ENCODE measurements at regions of chr6 and their contacts with region 1.

Region 1: DNA sequence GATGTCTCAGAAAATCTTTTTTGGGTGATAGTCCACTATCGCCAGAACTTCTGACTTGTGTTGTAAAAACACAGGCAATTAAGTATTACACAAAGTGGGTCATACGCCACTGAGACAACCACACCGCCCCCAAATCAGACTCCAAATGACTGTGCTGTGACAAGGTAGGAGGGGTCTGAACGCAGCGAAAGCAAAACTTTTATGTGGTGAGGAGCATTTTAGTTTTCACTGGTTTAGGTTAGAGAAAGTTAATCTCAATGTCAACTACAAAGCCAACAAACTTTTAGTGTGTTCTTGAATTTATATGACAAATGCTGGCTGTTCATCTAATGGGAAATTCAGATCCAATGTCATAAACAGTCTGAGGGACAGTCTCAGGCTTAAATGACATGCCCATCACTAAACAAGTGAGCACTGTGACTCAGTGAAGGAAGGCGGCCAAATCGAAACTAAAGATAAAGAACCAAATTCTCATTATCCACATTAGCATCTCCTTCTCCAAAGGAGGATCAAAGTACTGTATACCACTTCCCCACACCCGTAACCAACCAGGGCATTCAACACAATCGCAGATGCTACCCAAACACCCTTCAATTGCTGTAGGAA is 186.7 kb downstream of the GJA10 start:
- DNase-seq: peak; percentile 76 to 90 (median 84)
- H3K4me3 ChIP-seq: peak overlapping the region; percentile 24 to 54
- H3K4me3 Mint-ChIP-seq: peak overlapping the region; percentile 80 to 98 (median 96)
- H3K27ac ChIP-seq: peak overlapping the region; percentile 64
- H3K27ac Mint-ChIP-seq: peak overlapping the region; percentile 91 to 99 (median 98)
- H3K4me1 ChIP-seq: peaks cover 75% of the 10 kb centered on the region
- H3K4me1 Mint-ChIP-seq: peaks cover 64 to 94% (median 79%) of the 10 kb centered on the region in 4 donors
- H3K27me3 ChIP-seq: no peaks in the 10 kb centered on the region
- H3K27me3 Mint-ChIP-seq: no peaks in the 10 kb centered on the region

Region 2: GRCh38 chr6:90068264-90068663 is 12.7 kb before region 1 on chr6:
- CTCF ChIA-PET with region 1: no interaction called
- POLR2A ChIA-PET with region 1: interaction called, 6 read pairs
- intact Hi-C with region 1: loop called (anchors 1 kb)
- DNase-seq: no peak
- H3K4me3 ChIP-seq: no peak overlapping the region
- H3K4me3 Mint-ChIP-seq: peak overlapping the region in 2 of 8 donors; percentile 11 to 35
- H3K27ac ChIP-seq: no peak overlapping the region
- H3K27ac Mint-ChIP-seq: peak overlapping the region in 1 of 7 donors; percentile 32
- H3K4me1 ChIP-seq: peaks cover 32% of the 10 kb centered on the region
- H3K4me1 Mint-ChIP-seq: peaks cover 52 to 88% (median 67%) of the 10 kb centered on the region in 4 donors
- H3K27me3 ChIP-seq: no peaks in the 10 kb centered on the region
- H3K27me3 Mint-ChIP-seq: no peaks in the 10 kb centered on the region

Region 3: GRCh38 chr6:90131614-90132423 is 50.8 kb after region 1 on chr6:
- CTCF ChIA-PET with region 1: no interaction called
- POLR2A ChIA-PET with region 1: no interaction called
- intact Hi-C with region 1: no loop called
- DNase-seq: no peak
- H3K4me3 ChIP-seq: no peak overlapping the region
- H3K4me3 Mint-ChIP-seq: no peak overlapping the region
- H3K27ac ChIP-seq: no peak overlapping the region
- H3K27ac Mint-ChIP-seq: peak overlapping the region in 1 of 7 donors; percentile 10
- H3K4me1 ChIP-seq: no peaks in the 10 kb centered on the region
- H3K4me1 Mint-ChIP-seq: peaks cover 7 to 24% (median 16%) of the 10 kb centered on the region in 4 donors
- H3K27me3 ChIP-seq: no peaks in the 10 kb centered on the region
- H3K27me3 Mint-ChIP-seq: no peaks in the 10 kb centered on the region

Region 4: DNA sequence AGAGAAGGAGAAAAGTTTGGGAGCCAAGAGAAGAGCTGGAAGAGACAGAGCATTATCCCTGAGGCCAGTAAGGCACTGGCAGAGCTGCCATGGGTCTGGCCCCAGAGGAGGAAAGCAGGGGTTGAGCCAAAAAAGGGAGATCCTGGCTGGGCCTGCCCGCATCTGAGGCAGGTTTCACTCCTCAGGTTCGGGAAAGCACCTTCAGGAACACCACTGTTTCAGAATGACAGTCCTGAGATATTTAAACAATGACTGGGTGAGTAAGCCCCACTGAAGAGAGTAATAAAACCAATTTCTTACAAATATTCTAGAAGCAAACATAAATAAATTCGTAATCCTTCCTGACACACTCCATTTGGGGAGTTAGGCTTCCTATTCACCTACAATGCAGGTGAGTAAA is 63.4 kb after region 1 on chr6:
- CTCF ChIA-PET with region 1: no interaction called
- POLR2A ChIA-PET with region 1: no interaction called
- intact Hi-C with region 1: no loop called
- DNase-seq: no peak
- H3K4me3 ChIP-seq: no peak overlapping the region
- H3K4me3 Mint-ChIP-seq: no peak overlapping the region
- H3K27ac ChIP-seq: no peak overlapping the region
- H3K27ac Mint-ChIP-seq: no peak overlapping the region
- H3K4me1 ChIP-seq: peaks cover 6% of the 10 kb centered on the region
- H3K4me1 Mint-ChIP-seq: peaks cover 12 to 30% (median 20%) of the 10 kb centered on the region in 4 donors
- H3K27me3 ChIP-seq: no peaks in the 10 kb centered on the region
- H3K27me3 Mint-ChIP-seq: no peaks in the 10 kb centered on the region

Region 5: GRCh38 chr6:90156861-90157260 is 75.9 kb after region 1 on chr6:
- CTCF ChIA-PET with region 1: interaction called, 3 read pairs
- POLR2A ChIA-PET with region 1: no interaction called
- intact Hi-C with region 1: loop called (anchors 1 kb)
- DNase-seq: peak; percentile 46 to 54 (median 49)
- H3K4me3 ChIP-seq: no peak overlapping the region
- H3K4me3 Mint-ChIP-seq: peak overlapping the region; percentile 3 to 73 (median 60)
- H3K27ac ChIP-seq: no peak overlapping the region
- H3K27ac Mint-ChIP-seq: peak overlapping the region; percentile 40 to 92 (median 84)
- H3K4me1 ChIP-seq: peaks cover 43% of the 10 kb centered on the region
- H3K4me1 Mint-ChIP-seq: peaks cover 22 to 64% (median 49%) of the 10 kb centered on the region in 4 donors
- H3K27me3 ChIP-seq: no peaks in the 10 kb centered on the region
- H3K27me3 Mint-ChIP-seq: no peaks in the 10 kb centered on the region

Region 6: GRCh38 chr6:90274451-90275030 is 193.6 kb after region 1 on chr6:
- CTCF ChIA-PET with region 1: interaction called, 4 read pairs
- POLR2A ChIA-PET with region 1: interaction called, 4 read pairs
- intact Hi-C with region 1: loop called (anchors 2 kb)
- DNase-seq: peak; percentile 93 to 99 (median 97)
- H3K4me3 ChIP-seq: peak overlapping the region in 1 of 2 donors; percentile 21
- H3K4me3 Mint-ChIP-seq: peak overlapping the region; percentile 60 to 89 (median 79)
- H3K27ac ChIP-seq: peak overlapping the region; percentile 82
- H3K27ac Mint-ChIP-seq: peak overlapping the region; percentile 94 to 100 (median 99)
- H3K4me1 ChIP-seq: peaks cover 50% of the 10 kb centered on the region
- H3K4me1 Mint-ChIP-seq: peaks cover 51 to 80% (median 67%) of the 10 kb centered on the region in 4 donors
- H3K27me3 ChIP-seq: no peaks in the 10 kb centered on the region
- H3K27me3 Mint-ChIP-seq: no peaks in the 10 kb centered on the region

Region 7: DNA sequence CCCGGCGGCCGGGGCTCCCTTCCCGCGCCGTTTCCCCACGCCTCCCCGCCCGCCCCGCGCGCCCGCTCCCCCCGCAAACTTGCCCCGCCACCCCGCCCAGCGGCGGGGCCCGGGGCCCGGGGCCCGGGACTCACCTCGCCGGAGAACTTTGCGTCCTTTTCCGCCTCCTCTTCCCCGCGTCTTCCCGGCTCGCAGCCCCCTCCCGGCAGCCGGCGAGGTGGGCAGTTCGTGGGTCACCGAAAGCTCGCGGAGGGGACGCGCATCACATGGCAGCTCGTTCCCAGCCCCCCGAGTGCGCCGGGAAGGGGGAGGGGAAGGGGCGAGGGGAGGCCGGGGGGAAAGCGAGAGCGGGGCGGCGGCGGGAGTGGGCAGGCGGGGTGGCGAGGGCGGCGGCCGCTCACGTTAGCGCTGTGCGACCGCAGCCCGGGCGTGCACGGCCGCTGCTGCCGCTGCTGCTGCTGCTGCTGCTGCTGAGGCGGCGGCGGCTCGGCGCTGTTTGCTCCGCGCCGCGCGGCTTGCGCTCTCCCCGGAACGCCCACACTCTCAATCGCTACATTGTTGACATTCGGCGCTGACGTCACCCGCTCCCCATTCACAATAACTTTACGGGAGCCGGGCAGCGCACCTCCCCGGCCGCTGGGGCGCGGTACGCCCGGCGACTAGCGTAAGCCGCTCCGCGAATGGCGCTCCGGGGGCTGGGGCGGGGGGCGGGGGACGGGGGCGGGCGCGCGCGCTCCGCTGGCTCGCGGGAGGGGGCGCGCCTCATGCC is 215.6 kb after region 1 on chr6 and contains the start of gene BACH2:
- CTCF ChIA-PET with region 1: no interaction called
- POLR2A ChIA-PET with region 1: interaction called, 7 read pairs
- intact Hi-C with region 1: loop called (anchors 2 kb)
- DNase-seq: peak; percentile 90 to 96 (median 92)
- H3K4me3 ChIP-seq: peak within 1 kb of the TSS; percentile 43 to 81
- H3K4me3 Mint-ChIP-seq: peak within 1 kb of the TSS; percentile 90 to 96 (median 93)
- H3K27ac ChIP-seq: peak within 1 kb of the TSS; percentile 65
- H3K27ac Mint-ChIP-seq: peak within 1 kb of the TSS; percentile 92 to 99 (median 97)
- H3K4me1 ChIP-seq: peaks cover 40% of the 10 kb centered on the region
- H3K4me1 Mint-ChIP-seq: peaks cover 14 to 40% (median 24%) of the 10 kb centered on the region in 4 donors
- H3K27me3 ChIP-seq: no peaks in the 10 kb centered on the region
- H3K27me3 Mint-ChIP-seq: peaks cover 0 to 4% of the 10 kb centered on the region in 2 donors
- total RNA-seq, gene BACH2: 44.4 to 48.0 TPM

Measured in CD4-positive, alpha-beta memory T cell (primary cell).